ENCODE measurements at regions of chr1 and their contacts with region 1.

Region 1: DNA sequence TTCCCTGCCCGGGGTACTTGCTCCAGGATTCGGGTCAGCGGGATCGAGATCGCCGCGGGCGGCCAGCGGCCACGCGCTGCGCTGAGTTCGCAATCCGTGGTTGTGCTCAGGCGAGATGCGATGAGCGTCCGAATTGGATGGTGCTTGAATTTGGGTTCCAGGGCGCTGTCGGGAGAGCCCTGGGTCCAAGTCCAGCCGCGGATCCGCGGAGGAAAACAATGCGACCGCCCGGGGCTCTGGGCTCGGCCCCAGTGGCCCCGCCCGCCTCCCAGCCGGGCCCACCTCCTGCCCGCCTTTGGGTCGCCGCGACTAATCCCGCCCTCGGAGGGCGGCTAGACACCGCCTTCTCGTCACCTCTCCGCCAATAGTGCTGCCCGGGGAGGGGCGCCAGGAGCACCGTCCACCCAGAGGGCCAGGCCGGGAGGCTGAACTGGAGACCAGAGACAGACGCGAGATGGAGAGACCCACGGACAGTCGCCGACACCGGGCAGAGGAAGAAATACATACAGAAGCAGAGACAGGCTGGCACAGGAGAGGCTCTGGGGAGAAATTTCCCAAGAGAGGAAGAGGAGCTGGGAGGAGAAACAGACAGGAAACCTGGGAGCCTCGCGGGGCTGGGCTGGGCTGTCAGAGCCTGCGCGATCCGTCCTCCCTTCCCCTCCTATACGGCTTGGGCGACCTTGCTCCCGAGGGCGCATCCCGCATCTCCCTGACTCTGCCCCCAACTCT is at the start of gene SEMA6C:
- DNase-seq: peak; percentile 95
- H3K4me3 ChIP-seq: peak within 1 kb of the TSS; percentile 49 to 81 (median 59)
- H3K27ac ChIP-seq: no peak within 1 kb of the TSS
- H3K4me1 ChIP-seq: peaks cover 29% of the 10 kb centered on the region
- H3K27me3 ChIP-seq: no peaks in the 10 kb centered on the region
- CTCF ChIP-seq: no peak
- POLR2A ChIP-seq: peak; percentile 91
- total RNA-seq, gene SEMA6C: 46.2 and 53.0 TPM in 2 replicates

Region 2: DNA sequence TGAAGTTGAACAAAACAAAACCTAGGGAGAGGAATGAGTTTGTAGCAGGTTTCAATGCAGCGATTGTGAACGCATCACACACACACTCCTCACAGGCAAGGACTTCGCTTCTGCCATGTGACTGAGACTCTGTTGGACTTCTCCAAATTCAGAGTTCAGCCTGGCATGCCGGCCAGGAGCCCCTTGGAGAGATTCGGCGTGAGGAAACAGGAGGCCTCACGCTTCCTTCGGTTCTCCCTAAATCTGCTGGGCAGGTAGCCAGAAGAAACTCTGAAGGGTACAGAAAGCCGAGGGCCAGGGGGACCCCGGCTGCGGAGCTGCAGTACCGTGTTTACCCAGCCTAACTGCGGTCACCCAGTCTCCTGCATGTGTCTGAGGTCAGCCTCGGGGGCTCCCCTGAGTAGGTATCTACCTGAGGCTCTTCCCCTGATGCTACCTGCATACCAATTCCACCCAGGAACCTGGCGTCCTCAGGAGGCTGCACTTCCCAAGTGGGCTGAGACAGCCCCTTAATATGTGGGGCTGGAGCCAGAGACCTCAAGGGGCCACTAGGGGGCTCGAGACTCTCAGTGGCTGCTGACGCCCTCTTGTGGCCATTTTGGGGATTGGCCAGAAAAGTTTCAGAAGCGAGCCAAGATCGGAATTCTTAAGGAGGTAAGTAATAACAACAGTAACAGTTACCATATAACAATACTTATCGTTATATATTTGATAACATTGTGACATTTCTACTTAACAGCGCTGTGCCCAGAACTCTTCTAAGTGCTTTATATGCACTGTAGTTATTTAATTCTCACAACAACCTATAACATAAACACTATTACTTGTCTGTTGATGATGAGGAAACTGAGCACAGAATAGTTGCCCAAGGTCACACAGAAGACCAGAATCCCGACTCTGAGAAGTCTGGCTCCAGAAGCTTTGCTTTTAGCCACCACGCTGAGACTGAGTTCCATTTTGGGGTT is 167.2 kb before region 1 on chr1:
- CTCF ChIA-PET with region 1: no interaction called
- POLR2A ChIA-PET with region 1: no interaction called
- dilution Hi-C with region 1: no loop called
- intact Hi-C with region 1: loop called (anchors 5 kb)
- DNase-seq: peak; percentile 91
- H3K4me3 ChIP-seq: no peak overlapping the region
- H3K27ac ChIP-seq: no peak overlapping the region
- H3K4me1 ChIP-seq: peaks cover 22% of the 10 kb centered on the region
- H3K27me3 ChIP-seq: no peaks in the 10 kb centered on the region
- CTCF ChIP-seq: peak; percentile 100
- POLR2A ChIP-seq: no peak

Region 3: DNA sequence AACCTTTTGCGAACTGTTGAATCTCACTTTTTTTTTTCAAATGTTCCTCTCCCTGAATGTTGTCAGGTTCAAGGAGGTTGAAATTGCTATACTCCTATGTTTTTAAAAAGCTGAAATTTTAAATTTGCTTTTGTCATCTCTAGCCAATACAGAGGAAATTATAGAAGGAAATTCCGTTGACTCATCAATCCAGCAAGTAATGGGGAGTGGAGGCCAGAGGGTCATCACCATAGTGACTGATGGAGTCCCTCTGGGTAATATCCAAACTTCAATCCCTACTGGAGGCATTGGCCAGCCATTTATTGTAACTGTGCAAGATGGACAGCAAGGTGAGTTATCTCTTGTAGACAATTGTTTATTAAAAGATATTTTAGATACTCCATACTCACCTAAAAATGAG is 39.7 kb before region 1 on chr1:
- CTCF ChIA-PET with region 1: interaction called, 623 read pairs
- POLR2A ChIA-PET with region 1: no interaction called
- dilution Hi-C with region 1: no loop called
- intact Hi-C with region 1: loop called (anchors 2 kb)
- DNase-seq: peak; percentile 73
- H3K4me3 ChIP-seq: no peak overlapping the region
- H3K27ac ChIP-seq: peak overlapping the region; percentile 38
- H3K4me1 ChIP-seq: peaks cover 10% of the 10 kb centered on the region
- H3K27me3 ChIP-seq: no peaks in the 10 kb centered on the region
- CTCF ChIP-seq: no peak
- POLR2A ChIP-seq: no peak

Region 4: GRCh38 chr1:151130987-151131586 is 15.5 kb before region 1 on chr1:
- CTCF ChIA-PET with region 1: interaction called, 9 read pairs
- POLR2A ChIA-PET with region 1: interaction called, 4 read pairs
- dilution Hi-C with region 1: no loop called
- intact Hi-C with region 1: loop called (anchors 1 kb)
- DNase-seq: peak; percentile 81
- H3K4me3 ChIP-seq: peak overlapping the region in 1 of 3 experiments; percentile 10
- H3K27ac ChIP-seq: no peak overlapping the region
- H3K4me1 ChIP-seq: peaks cover 6% of the 10 kb centered on the region
- H3K27me3 ChIP-seq: no peaks in the 10 kb centered on the region
- CTCF ChIP-seq: no peak
- POLR2A ChIP-seq: peak; percentile 35

Region 5: GRCh38 chr1:151165738-151166505 is 19.3 kb after region 1 on chr1 and contains the starts of genes LYSMD1 and SCNM1:
- CTCF ChIA-PET with region 1: interaction called, 4 read pairs
- POLR2A ChIA-PET with region 1: no interaction called
- dilution Hi-C with region 1: no loop called
- intact Hi-C with region 1: loop called (anchors 1 kb)
- DNase-seq: peak; percentile 98
- H3K4me3 ChIP-seq: peak within 1 kb of the TSS; percentile 65 to 89 (median 81)
- H3K27ac ChIP-seq: peak within 1 kb of the TSS; percentile 65
- H3K4me1 ChIP-seq: peaks cover 19% of the 10 kb centered on the region
- H3K27me3 ChIP-seq: no peaks in the 10 kb centered on the region
- CTCF ChIP-seq: no peak
- POLR2A ChIP-seq: peak; percentile 69
- total RNA-seq, gene LYSMD1: 6.4 and 8.2 TPM in 2 replicates
- total RNA-seq, gene SCNM1: 43.1 and 49.0 TPM in 2 replicates

Region 6: GRCh38 chr1:151606395-151606794 is 459.8 kb after region 1 on chr1:
- CTCF ChIA-PET with region 1: no interaction called
- POLR2A ChIA-PET with region 1: no interaction called
- dilution Hi-C with region 1: no loop called
- intact Hi-C with region 1: no loop called
- DNase-seq: no peak
- H3K4me3 ChIP-seq: no peak overlapping the region
- H3K27ac ChIP-seq: no peak overlapping the region
- H3K4me1 ChIP-seq: no peaks in the 10 kb centered on the region
- H3K27me3 ChIP-seq: peaks cover 0 to 2% of the 10 kb centered on the region in 2 experiments
- CTCF ChIP-seq: no peak
- POLR2A ChIP-seq: no peak

Measured in endothelial cell of umbilical vein (primary cell).